PC-3 (cell line): ENCODE measurements at regions of chr6 and their contacts with region 1.

Region 1: GRCh38 chr6:46925563-46926253 is 4.0 kb upstream of the ADGRF5 start:
- DNase-seq: peak; percentile 91
- ATAC-seq: peak; percentile 80
- H3K4me3 ChIP-seq: peak overlapping the region; percentile 14; the same call in 1 of the 2 replicates
- H3K27ac ChIP-seq: peak overlapping the region; percentile 97
- H3K4me1 ChIP-seq: peaks cover 42% of the 10 kb centered on the region
- H3K27me3 ChIP-seq: no peaks in the 10 kb centered on the region
- CTCF ChIP-seq: no peak

Region 2: GRCh38 chr6:46606338-46606737 is 319.4 kb before region 1 on chr6:
- CTCF ChIA-PET with region 1: no interaction called
- POLR2A ChIA-PET with region 1: no interaction called
- intact Hi-C with region 1: no loop called
- DNase-seq: peak; percentile 5
- ATAC-seq: no peak
- H3K4me3 ChIP-seq: no peak overlapping the region
- H3K27ac ChIP-seq: no peak overlapping the region
- H3K4me1 ChIP-seq: no peaks in the 10 kb centered on the region
- H3K27me3 ChIP-seq: no peaks in the 10 kb centered on the region
- CTCF ChIP-seq: no peak

Region 3: GRCh38 chr6:46893648-46894047 is 32.1 kb before region 1 on chr6:
- CTCF ChIA-PET with region 1: no interaction called
- POLR2A ChIA-PET with region 1: no interaction called
- intact Hi-C with region 1: loop called (anchors 5 kb)
- DNase-seq: peak; percentile 48
- ATAC-seq: peak; percentile 38
- H3K4me3 ChIP-seq: no peak overlapping the region
- H3K27ac ChIP-seq: 0 out of 2 replicates have a peak overlapping the region, but pooled peaks have one; percentile 12
- H3K4me1 ChIP-seq: peaks cover 25% of the 10 kb centered on the region
- H3K27me3 ChIP-seq: no peaks in the 10 kb centered on the region
- CTCF ChIP-seq: no peak

Region 4: GRCh38 chr6:46914279-46914810 is 11.4 kb before region 1 on chr6:
- CTCF ChIA-PET with region 1: no interaction called
- POLR2A ChIA-PET with region 1: no interaction called
- intact Hi-C with region 1: loop called (anchors 1 kb)
- DNase-seq: peak; percentile 65
- ATAC-seq: peak; percentile 86
- H3K4me3 ChIP-seq: no peak overlapping the region
- H3K27ac ChIP-seq: peak overlapping the region; percentile 31
- H3K4me1 ChIP-seq: peaks cover 17% of the 10 kb centered on the region
- H3K27me3 ChIP-seq: no peaks in the 10 kb centered on the region
- CTCF ChIP-seq: no peak